Endothelial cell of umbilical vein (primary cell): ENCODE measurements at regions of chr1 and their contacts with region 1.

Region 1: GRCh38 chr1:20786253-20787028 is 666 bp downstream of the HP1BP3 start:
- DNase-seq: peak; percentile 96
- H3K4me3 ChIP-seq: peak overlapping the region; percentile 32 to 90 (median 83)
- H3K27ac ChIP-seq: peak overlapping the region; percentile 89
- H3K4me1 ChIP-seq: peaks cover 13% of the 10 kb centered on the region
- H3K27me3 ChIP-seq: no peaks in the 10 kb centered on the region
- CTCF ChIP-seq: no peak
- POLR2A ChIP-seq: peak; percentile 69

Region 2: GRCh38 chr1:20770314-20771087 is 15.9 kb before region 1 on chr1:
- CTCF ChIA-PET with region 1: interaction called, 14 read pairs
- POLR2A ChIA-PET with region 1: interaction called, 4 read pairs
- dilution Hi-C with region 1: no loop called
- intact Hi-C with region 1: no loop called
- DNase-seq: no peak
- H3K4me3 ChIP-seq: no peak overlapping the region
- H3K27ac ChIP-seq: no peak overlapping the region
- H3K4me1 ChIP-seq: no peaks in the 10 kb centered on the region
- H3K27me3 ChIP-seq: no peaks in the 10 kb centered on the region
- CTCF ChIP-seq: no peak
- POLR2A ChIP-seq: no peak

Region 3: GRCh38 chr1:20811916-20812315 is 25.5 kb after region 1 on chr1:
- CTCF ChIA-PET with region 1: no interaction called
- POLR2A ChIA-PET with region 1: no interaction called
- dilution Hi-C with region 1: no loop called
- intact Hi-C with region 1: no loop called
- DNase-seq: no peak
- H3K4me3 ChIP-seq: no peak overlapping the region
- H3K27ac ChIP-seq: no peak overlapping the region
- H3K4me1 ChIP-seq: no peaks in the 10 kb centered on the region
- H3K27me3 ChIP-seq: no peaks in the 10 kb centered on the region
- CTCF ChIP-seq: no peak
- POLR2A ChIP-seq: no peak

Region 4: GRCh38 chr1:21176586-21177555 is 390.4 kb after region 1 on chr1 and contains the start of gene EIF4G3:
- CTCF ChIA-PET with region 1: no interaction called
- POLR2A ChIA-PET with region 1: no interaction called
- dilution Hi-C with region 1: no loop called
- intact Hi-C with region 1: loop called (anchors 5 kb)
- DNase-seq: peak; percentile 98
- H3K4me3 ChIP-seq: peak within 1 kb of the TSS; percentile 84 to 100 (median 94)
- H3K27ac ChIP-seq: peak within 1 kb of the TSS; percentile 86
- H3K4me1 ChIP-seq: peaks cover 12% of the 10 kb centered on the region
- H3K27me3 ChIP-seq: no peaks in the 10 kb centered on the region
- CTCF ChIP-seq: no peak
- POLR2A ChIP-seq: peak; percentile 76
- total RNA-seq, gene EIF4G3: 78.5 and 84.0 TPM in 2 replicates

Region 5: GRCh38 chr1:21184276-21184675 is 397.8 kb after region 1 on chr1:
- CTCF ChIA-PET with region 1: no interaction called
- POLR2A ChIA-PET with region 1: interaction called, 15 read pairs
- dilution Hi-C with region 1: no loop called
- intact Hi-C with region 1: loop called (anchors 5 kb)
- DNase-seq: no peak
- H3K4me3 ChIP-seq: no peak overlapping the region
- H3K27ac ChIP-seq: no peak overlapping the region
- H3K4me1 ChIP-seq: no peaks in the 10 kb centered on the region
- H3K27me3 ChIP-seq: no peaks in the 10 kb centered on the region
- CTCF ChIP-seq: no peak
- POLR2A ChIP-seq: no peak